Esophagus muscularis mucosa (tissue), 4 donors: ENCODE measurements at regions of chr22 and their contacts with region 1.

Region 1: GRCh38 chr22:45553351-45554039 is 50.8 kb downstream of the FBLN1 start:
- DNase-seq: peak; percentile 97
- H3K4me3 ChIP-seq: peak overlapping the region in 3 of 4 donors; percentile 8 to 40 (median 28)
- H3K27ac ChIP-seq: peak overlapping the region; percentile 80 to 89 (median 88)
- H3K4me1 ChIP-seq: peaks cover 44 to 63% (median 62%) of the 10 kb centered on the region in 4 donors
- H3K27me3 ChIP-seq: peaks cover 0 to 3% (median 0%) of the 10 kb centered on the region in 4 donors
- CTCF ChIP-seq: peak; percentile 91 to 95 (median 93)
- EP300 ChIP-seq: no peak
- POLR2A ChIP-seq: no peak

Region 2: GRCh38 chr22:45268958-45269844 is 284.3 kb before region 1 on chr22:
- intact Hi-C with region 1: loop called (anchors 5 kb)
- DNase-seq: no peak
- H3K4me3 ChIP-seq: peak overlapping the region; percentile 59 to 70 (median 62)
- H3K27ac ChIP-seq: peak overlapping the region in 3 of 4 donors; percentile 18 to 62 (median 38)
- H3K4me1 ChIP-seq: peaks cover 26 to 52% (median 39%) of the 10 kb centered on the region in 4 donors
- H3K27me3 ChIP-seq: no peaks in the 10 kb centered on the region
- CTCF ChIP-seq: peak; percentile 88 to 93 (median 91)
- EP300 ChIP-seq: no peak
- POLR2A ChIP-seq: no peak

Region 3: GRCh38 chr22:45318168-45318557 is 235.3 kb before region 1 on chr22:
- intact Hi-C with region 1: loop called (anchors 5 kb)
- DNase-seq: peak; percentile 97
- H3K4me3 ChIP-seq: peak overlapping the region in 3 of 4 donors; percentile 10 to 24 (median 11)
- H3K27ac ChIP-seq: peak overlapping the region; percentile 83 to 92 (median 86)
- H3K4me1 ChIP-seq: peaks cover 27 to 65% (median 51%) of the 10 kb centered on the region in 4 donors
- H3K27me3 ChIP-seq: no peaks in the 10 kb centered on the region
- CTCF ChIP-seq: no peak
- EP300 ChIP-seq: no peak
- POLR2A ChIP-seq: no peak

Region 4: DNA sequence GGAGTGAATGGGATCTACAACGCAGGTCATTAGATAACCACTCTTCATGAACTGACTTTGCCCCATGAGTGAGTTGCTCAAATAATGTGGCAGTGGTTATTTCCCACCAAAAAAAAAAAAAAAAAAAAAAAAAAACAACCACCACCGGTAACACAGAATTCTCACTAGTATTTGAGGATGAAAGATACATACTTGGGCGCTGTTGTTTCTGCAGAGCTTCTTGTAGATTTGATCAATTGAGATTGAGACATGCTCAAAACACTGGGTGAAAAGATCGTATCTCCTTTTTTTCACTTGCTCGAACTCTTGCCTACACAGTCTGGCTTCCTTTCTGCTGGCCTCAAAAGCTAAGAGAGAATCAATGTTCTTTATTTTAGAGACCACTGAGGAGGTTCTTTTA is 199.7 kb before region 1 on chr22:
- intact Hi-C with region 1: no loop called
- DNase-seq: no peak
- H3K4me3 ChIP-seq: no peak overlapping the region
- H3K27ac ChIP-seq: no peak overlapping the region
- H3K4me1 ChIP-seq: no peaks in the 10 kb centered on the region
- H3K27me3 ChIP-seq: no peaks in the 10 kb centered on the region
- CTCF ChIP-seq: no peak
- EP300 ChIP-seq: no peak
- POLR2A ChIP-seq: no peak

Region 5: GRCh38 chr22:45441138-45441537 is 112.4 kb before region 1 on chr22:
- intact Hi-C with region 1: loop called (anchors 1 kb)
- DNase-seq: no peak
- H3K4me3 ChIP-seq: no peak overlapping the region
- H3K27ac ChIP-seq: peak overlapping the region in 1 of 4 donors; percentile 44
- H3K4me1 ChIP-seq: peaks cover 0 to 11% (median 8%) of the 10 kb centered on the region in 4 donors
- H3K27me3 ChIP-seq: no peaks in the 10 kb centered on the region
- CTCF ChIP-seq: peak; percentile 55 to 69 (median 66)
- EP300 ChIP-seq: no peak
- POLR2A ChIP-seq: no peak